ENCODE measurements at regions of chr5 and their contacts with region 1.

Region 1: GRCh38 chr5:126422989-126423788 is at the start of gene GRAMD2B:
- DNase-seq: peak; percentile 70 to 82 (median 75)
- H3K4me3 ChIP-seq: peak within 1 kb of the TSS; percentile 70 to 79
- H3K4me3 Mint-ChIP-seq: peak within 1 kb of the TSS; percentile 90 to 95 (median 92)
- H3K27ac ChIP-seq: peak within 1 kb of the TSS; percentile 87
- H3K27ac Mint-ChIP-seq: peak within 1 kb of the TSS; percentile 87 to 95 (median 94)
- H3K4me1 ChIP-seq: peaks cover 22% of the 10 kb centered on the region
- H3K4me1 Mint-ChIP-seq: peaks cover 20 to 40% (median 27%) of the 10 kb centered on the region in 4 donors
- H3K27me3 ChIP-seq: no peaks in the 10 kb centered on the region
- H3K27me3 Mint-ChIP-seq: no peaks in the 10 kb centered on the region
- total RNA-seq, gene GRAMD2B: 4.8 to 6.1 TPM

Region 2: GRCh38 chr5:126370796-126371718 is 52.1 kb before region 1 on chr5:
- CTCF ChIA-PET with region 1: no interaction called
- POLR2A ChIA-PET with region 1: no interaction called
- intact Hi-C with region 1: no loop called
- DNase-seq: no peak
- H3K4me3 ChIP-seq: no peak overlapping the region
- H3K4me3 Mint-ChIP-seq: no peak overlapping the region
- H3K27ac ChIP-seq: no peak overlapping the region
- H3K27ac Mint-ChIP-seq: no peak overlapping the region
- H3K4me1 ChIP-seq: peaks cover 19% of the 10 kb centered on the region
- H3K4me1 Mint-ChIP-seq: peaks cover 12 to 15% (median 14%) of the 10 kb centered on the region in 4 donors
- H3K27me3 ChIP-seq: no peaks in the 10 kb centered on the region
- H3K27me3 Mint-ChIP-seq: no peaks in the 10 kb centered on the region

Region 3: GRCh38 chr5:126449751-126450271 is 26.6 kb after region 1 on chr5:
- CTCF ChIA-PET with region 1: interaction called, 18 read pairs
- POLR2A ChIA-PET with region 1: interaction called, 65 read pairs
- intact Hi-C with region 1: loop called (anchors 1 kb)
- DNase-seq: peak; percentile 50 to 72 (median 63)
- H3K4me3 ChIP-seq: peak overlapping the region; percentile 32 to 44
- H3K4me3 Mint-ChIP-seq: peak overlapping the region; percentile 83 to 94 (median 90)
- H3K27ac ChIP-seq: peak overlapping the region; percentile 87
- H3K27ac Mint-ChIP-seq: peak overlapping the region; percentile 95 to 100 (median 98)
- H3K4me1 ChIP-seq: peaks cover 57% of the 10 kb centered on the region
- H3K4me1 Mint-ChIP-seq: peaks cover 45 to 64% (median 55%) of the 10 kb centered on the region in 4 donors
- H3K27me3 ChIP-seq: no peaks in the 10 kb centered on the region
- H3K27me3 Mint-ChIP-seq: no peaks in the 10 kb centered on the region

Region 4: DNA sequence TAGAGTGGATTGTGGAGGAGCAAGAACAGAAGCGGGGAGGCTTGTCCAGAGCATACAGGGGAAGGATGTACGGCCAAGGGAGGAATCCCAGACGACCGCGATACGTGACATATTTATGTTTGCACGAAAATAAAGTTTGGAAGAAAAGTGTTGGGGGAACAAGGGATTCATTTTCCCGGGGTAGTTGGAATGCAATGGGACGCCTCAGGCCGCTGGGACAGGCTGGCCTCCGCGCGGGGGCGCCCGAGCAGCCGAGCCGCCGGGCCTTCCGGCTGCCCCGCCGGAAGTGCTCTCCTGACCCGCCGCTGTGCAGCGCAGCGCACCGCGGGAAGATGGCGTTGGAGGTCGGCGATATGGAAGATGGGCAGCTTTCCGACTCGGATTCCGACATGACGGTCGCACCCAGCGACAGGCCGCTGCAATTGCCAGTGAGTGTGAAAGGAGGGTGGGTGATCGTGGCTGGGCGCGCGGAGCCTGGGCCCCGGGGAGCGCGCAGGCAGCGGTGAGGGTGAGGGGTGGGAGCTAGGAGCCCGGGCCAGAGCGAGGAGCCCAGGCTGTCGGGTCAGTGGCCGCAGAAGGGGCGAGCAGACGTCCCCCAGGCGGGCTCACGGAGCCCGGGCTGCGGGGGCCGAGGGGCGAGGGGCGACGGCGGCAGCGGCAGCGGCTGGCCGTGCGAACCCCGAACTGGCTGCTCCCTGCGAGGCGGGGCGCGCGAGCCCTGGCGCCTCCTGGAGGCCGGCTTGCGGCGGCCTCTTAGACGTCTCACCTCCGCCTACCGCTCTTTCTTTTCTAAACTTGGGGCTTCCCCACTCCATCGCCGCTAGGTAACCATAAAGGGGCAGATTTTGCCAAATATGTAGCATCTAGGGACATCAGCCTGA is 177.7 kb after region 1 on chr5 and contains the start of gene PHAX:
- CTCF ChIA-PET with region 1: interaction called, 4 read pairs
- POLR2A ChIA-PET with region 1: interaction called, 3 read pairs
- intact Hi-C with region 1: loop called (anchors 2 kb)
- DNase-seq: peak; percentile 68 to 75 (median 74)
- H3K4me3 ChIP-seq: peak within 1 kb of the TSS; percentile 50 to 95
- H3K4me3 Mint-ChIP-seq: peak within 1 kb of the TSS; percentile 96 to 99 (median 97)
- H3K27ac ChIP-seq: peak within 1 kb of the TSS; percentile 80
- H3K27ac Mint-ChIP-seq: peak within 1 kb of the TSS; percentile 84 to 99 (median 96)
- H3K4me1 ChIP-seq: peaks cover 31% of the 10 kb centered on the region
- H3K4me1 Mint-ChIP-seq: peaks cover 22 to 46% (median 34%) of the 10 kb centered on the region in 4 donors
- H3K27me3 ChIP-seq: no peaks in the 10 kb centered on the region
- H3K27me3 Mint-ChIP-seq: no peaks in the 10 kb centered on the region
- total RNA-seq, gene PHAX: 41.2 to 43.4 TPM

Region 5: GRCh38 chr5:126656396-126657007 is 233.3 kb after region 1 on chr5:
- CTCF ChIA-PET with region 1: no interaction called
- POLR2A ChIA-PET with region 1: no interaction called
- intact Hi-C with region 1: no loop called
- DNase-seq: peak in 4 of 5 donors; percentile 22 to 31 (median 26)
- H3K4me3 ChIP-seq: no peak overlapping the region
- H3K4me3 Mint-ChIP-seq: no peak overlapping the region
- H3K27ac ChIP-seq: no peak overlapping the region
- H3K27ac Mint-ChIP-seq: peak overlapping the region in 2 of 7 donors; percentile 1 to 53
- H3K4me1 ChIP-seq: no peaks in the 10 kb centered on the region
- H3K4me1 Mint-ChIP-seq: no peaks in the 10 kb centered on the region
- H3K27me3 ChIP-seq: peaks cover 4% of the 10 kb centered on the region
- H3K27me3 Mint-ChIP-seq: peaks cover 1 to 2% of the 10 kb centered on the region in 2 donors

Region 6: DNA sequence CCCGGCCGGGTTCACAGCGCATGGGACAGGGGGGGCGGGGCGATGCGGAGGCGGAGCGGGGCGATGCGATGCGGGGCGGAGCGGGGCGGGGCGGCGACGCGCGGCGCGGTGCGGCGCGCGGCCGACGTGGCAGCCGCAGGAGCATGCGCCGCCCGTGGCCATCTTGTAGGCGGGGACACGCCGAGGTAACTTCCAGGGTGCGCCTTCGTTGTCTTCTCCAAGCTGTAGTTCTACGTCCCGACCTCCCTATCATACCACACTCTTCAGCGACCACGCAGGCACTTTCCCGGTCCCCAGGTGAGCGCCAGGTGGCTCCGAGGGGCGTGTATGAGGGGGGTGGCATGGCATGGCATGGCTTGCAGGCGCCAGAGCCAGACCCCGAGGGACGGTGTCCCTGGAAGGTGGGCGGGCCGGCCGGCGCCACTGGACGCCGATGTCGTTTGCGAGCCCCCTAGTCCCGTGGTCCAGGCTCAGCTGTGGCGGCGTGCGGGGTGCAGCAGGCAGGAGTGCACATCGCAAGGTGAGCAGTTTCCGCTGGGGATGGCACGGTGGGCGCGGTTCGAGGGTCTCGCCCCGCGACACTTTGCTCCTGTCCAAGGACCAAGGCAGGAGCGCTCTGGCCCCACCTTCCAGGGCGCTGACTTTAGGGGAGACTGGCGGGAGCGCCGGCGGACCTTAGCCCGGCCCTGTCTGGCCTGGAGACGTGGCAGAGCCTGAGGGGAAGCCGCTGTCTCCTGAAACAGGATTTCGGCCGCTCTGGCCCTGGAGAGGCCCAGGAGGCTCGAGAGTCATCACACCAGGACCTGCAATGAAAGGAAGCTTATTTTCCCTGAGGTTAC is 1094.5 kb after region 1 on chr5 and contains the start of gene PRRC1:
- CTCF ChIA-PET with region 1: no interaction called
- POLR2A ChIA-PET with region 1: no interaction called
- intact Hi-C with region 1: loop called (anchors 10 kb)
- DNase-seq: peak; percentile 74 to 83 (median 76)
- H3K4me3 ChIP-seq: peak within 1 kb of the TSS; percentile 79 to 97
- H3K4me3 Mint-ChIP-seq: peak within 1 kb of the TSS; percentile 87 to 93 (median 90)
- H3K27ac ChIP-seq: peak within 1 kb of the TSS; percentile 87
- H3K27ac Mint-ChIP-seq: peak within 1 kb of the TSS; percentile 70 to 93 (median 88)
- H3K4me1 ChIP-seq: peaks cover 25% of the 10 kb centered on the region
- H3K4me1 Mint-ChIP-seq: peaks cover 26 to 45% (median 34%) of the 10 kb centered on the region in 4 donors
- H3K27me3 ChIP-seq: peaks cover under 1% of the 10 kb centered on the region
- H3K27me3 Mint-ChIP-seq: peaks cover 4% of the 10 kb centered on the region in 2 donors
- total RNA-seq, gene PRRC1: 57.0 to 59.9 TPM